WTC11 (cell line): ENCODE measurements at regions of chr5 and their contacts with region 1.

Region 1: DNA sequence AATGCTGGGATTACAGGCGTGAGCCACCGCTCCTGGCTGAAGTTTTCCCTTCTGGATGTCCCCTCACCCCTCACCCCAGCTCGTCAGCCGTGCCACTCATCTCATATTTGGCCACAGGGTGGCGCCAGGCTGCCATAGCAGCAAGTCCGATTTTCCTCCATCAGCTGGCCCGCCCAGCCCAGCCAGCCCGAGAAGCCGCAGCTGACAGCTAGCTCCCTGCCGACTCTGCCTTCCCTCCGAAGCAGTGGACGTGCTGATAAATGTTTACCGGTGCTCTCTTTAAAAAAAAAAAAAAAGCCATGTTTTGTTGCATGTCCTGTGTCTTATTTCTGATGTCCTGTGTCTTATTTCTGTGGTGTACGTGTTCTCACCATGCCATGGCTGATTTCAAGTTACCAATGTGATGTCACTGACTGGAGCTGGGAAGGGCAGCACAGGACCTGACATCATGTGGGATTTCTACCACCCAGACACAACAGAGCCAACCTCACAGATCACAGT is 58.3 kb downstream of the PFDN1 start:
- DNase-seq: peak; percentile 98
- ATAC-seq: peak; percentile 49
- H3K4me3 Mint-ChIP-seq: no peak overlapping the region
- H3K27ac Mint-ChIP-seq: 0 out of 2 replicates have a peak overlapping the region, but pooled peaks have one; percentile 5
- H3K4me1 Mint-ChIP-seq: peaks cover 43% of the 10 kb centered on the region
- H3K27me3 Mint-ChIP-seq: no peaks in the 10 kb centered on the region
- CTCF ChIP-seq: peak; percentile 81

Region 2: GRCh38 chr5:140174465-140175366 is 69.9 kb before region 1 on chr5 and contains the start of gene CYSTM1:
- CTCF ChIA-PET with region 1: interaction called, 20 read pairs
- POLR2A ChIA-PET with region 1: interaction called, 3 read pairs
- DNase-seq: peak; percentile 98
- ATAC-seq: peak; percentile 88
- H3K4me3 Mint-ChIP-seq: peak within 1 kb of the TSS; percentile 87
- H3K27ac Mint-ChIP-seq: peak within 1 kb of the TSS; percentile 95
- H3K4me1 Mint-ChIP-seq: peaks cover 11% of the 10 kb centered on the region
- H3K27me3 Mint-ChIP-seq: peaks cover 11% of the 10 kb centered on the region; the same call in 1 of the 2 replicates
- CTCF ChIP-seq: no peak
- total RNA-seq, gene CYSTM1: 27.7 to 29.3 TPM (median 28.9 TPM) in 3 replicates

Region 3: GRCh38 chr5:140261403-140262171 is 17.0 kb after region 1 on chr5:
- CTCF ChIA-PET with region 1: interaction called, 34 read pairs
- POLR2A ChIA-PET with region 1: interaction called, 3 read pairs
- DNase-seq: no peak
- ATAC-seq: no peak
- H3K4me3 Mint-ChIP-seq: no peak overlapping the region
- H3K27ac Mint-ChIP-seq: no peak overlapping the region
- H3K4me1 Mint-ChIP-seq: peaks cover 22% of the 10 kb centered on the region
- H3K27me3 Mint-ChIP-seq: no peaks in the 10 kb centered on the region
- CTCF ChIP-seq: no peak

Region 4: GRCh38 chr5:140336388-140336787 is 91.8 kb after region 1 on chr5:
- CTCF ChIA-PET with region 1: interaction called, 15 read pairs
- POLR2A ChIA-PET with region 1: no interaction called
- DNase-seq: no peak
- ATAC-seq: no peak
- H3K4me3 Mint-ChIP-seq: no peak overlapping the region
- H3K27ac Mint-ChIP-seq: no peak overlapping the region
- H3K4me1 Mint-ChIP-seq: no peaks in the 10 kb centered on the region
- H3K27me3 Mint-ChIP-seq: no peaks in the 10 kb centered on the region
- CTCF ChIP-seq: no peak

Region 5: GRCh38 chr5:140362860-140363630 is 118.5 kb after region 1 on chr5:
- CTCF ChIA-PET with region 1: interaction called, 247 read pairs
- POLR2A ChIA-PET with region 1: interaction called, 6 read pairs
- DNase-seq: peak; percentile 95
- ATAC-seq: peak; percentile 88
- H3K4me3 Mint-ChIP-seq: peak overlapping the region; percentile 79
- H3K27ac Mint-ChIP-seq: no peak overlapping the region
- H3K4me1 Mint-ChIP-seq: peaks cover 7% of the 10 kb centered on the region
- H3K27me3 Mint-ChIP-seq: peaks cover 9% of the 10 kb centered on the region
- CTCF ChIP-seq: peak; percentile 96

Region 6: DNA sequence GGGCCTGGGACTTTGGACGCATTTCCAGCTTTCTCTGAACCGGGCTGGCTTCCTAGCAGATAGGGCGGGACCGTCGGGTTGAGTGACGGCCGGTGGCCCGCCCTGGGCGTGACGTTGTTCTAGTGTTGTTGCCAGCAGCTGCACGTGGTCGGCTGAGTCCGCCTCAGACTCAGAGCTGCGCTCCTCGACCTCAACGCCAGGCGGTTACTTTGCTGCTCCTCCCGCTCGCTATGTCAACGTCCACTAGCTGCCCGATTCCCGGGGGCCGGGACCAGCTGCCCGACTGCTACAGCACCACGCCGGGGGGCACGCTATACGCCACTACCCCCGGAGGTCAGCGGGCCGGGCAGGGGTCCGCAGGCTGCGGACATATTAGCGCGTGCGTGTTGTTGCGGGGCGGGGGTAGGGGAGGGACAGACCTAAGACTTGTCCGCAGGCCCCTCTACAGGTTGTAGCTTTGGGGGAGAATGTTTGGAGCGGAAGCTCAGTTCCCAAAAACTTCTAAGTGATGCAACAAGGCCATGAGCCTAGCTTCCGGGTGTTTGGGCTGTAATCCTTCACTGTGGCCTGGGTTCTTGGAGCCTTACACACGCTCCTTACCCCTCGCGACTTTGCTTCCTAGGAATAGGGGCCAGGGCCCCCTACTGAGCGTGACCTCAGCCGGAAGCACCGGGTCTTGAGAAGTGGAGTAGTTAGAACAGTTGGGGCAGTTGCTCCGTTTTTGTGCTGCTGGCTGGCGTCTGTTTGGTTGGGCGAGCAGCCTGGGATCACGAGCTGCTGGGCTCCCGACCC is 303.1 kb after region 1 on chr5 and contains the start of gene EIF4EBP3:
- CTCF ChIA-PET with region 1: interaction called, 10 read pairs
- POLR2A ChIA-PET with region 1: no interaction called
- DNase-seq: peak; percentile 98
- ATAC-seq: peak; percentile 95
- H3K4me3 Mint-ChIP-seq: peak within 1 kb of the TSS; percentile 77
- H3K27ac Mint-ChIP-seq: peak within 1 kb of the TSS; percentile 97
- H3K4me1 Mint-ChIP-seq: peaks cover 25% of the 10 kb centered on the region
- H3K27me3 Mint-ChIP-seq: no peaks in the 10 kb centered on the region
- CTCF ChIP-seq: no peak
- total RNA-seq, gene EIF4EBP3: 8.4 to 9.8 TPM (median 8.8 TPM) in 3 replicates